ENCODE measurements at regions of chr2 and their contacts with region 1.

Region 1: DNA sequence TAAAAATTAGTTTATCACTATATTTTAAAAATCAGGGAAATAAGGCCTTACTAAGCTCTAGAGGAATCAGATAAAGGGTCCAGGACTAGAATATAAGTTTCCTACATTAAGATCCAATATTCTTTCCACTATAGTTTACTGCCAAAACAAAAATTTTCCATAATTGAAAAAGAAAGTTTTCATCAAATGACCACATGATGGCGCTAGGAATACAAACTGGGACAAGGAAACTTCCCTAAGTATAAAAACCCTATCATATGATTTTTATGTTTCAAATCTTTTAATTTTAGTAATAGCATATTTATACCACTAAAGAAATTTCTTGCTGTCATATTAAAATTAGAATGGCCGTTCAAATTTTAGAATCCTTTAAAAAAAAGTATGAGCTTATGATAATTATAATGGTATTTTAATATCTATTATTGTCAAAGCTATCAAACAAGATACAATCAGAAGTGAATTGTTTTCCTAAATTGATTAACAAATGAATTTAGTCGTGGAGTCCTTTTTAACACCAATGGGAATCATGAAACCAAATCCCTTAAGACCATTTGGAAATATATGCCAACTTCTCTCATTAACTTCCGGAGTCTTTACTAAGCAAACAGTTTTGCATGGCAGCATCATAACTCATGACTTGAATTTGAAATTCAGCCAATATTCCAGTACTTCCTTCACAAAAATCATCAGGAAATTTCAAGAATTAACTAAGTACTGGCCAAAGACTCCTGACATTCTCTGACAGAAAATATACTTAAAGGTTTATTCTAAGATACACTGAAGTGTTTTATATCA is 70.3 kb downstream of the SCN1A start:
- DNase-seq: no peak
- H3K4me3 Mint-ChIP-seq: no peak overlapping the region
- H3K27ac Mint-ChIP-seq: no peak overlapping the region
- H3K4me1 Mint-ChIP-seq: no peaks in the 10 kb centered on the region
- H3K27me3 Mint-ChIP-seq: no peaks in the 10 kb centered on the region

Region 2: DNA sequence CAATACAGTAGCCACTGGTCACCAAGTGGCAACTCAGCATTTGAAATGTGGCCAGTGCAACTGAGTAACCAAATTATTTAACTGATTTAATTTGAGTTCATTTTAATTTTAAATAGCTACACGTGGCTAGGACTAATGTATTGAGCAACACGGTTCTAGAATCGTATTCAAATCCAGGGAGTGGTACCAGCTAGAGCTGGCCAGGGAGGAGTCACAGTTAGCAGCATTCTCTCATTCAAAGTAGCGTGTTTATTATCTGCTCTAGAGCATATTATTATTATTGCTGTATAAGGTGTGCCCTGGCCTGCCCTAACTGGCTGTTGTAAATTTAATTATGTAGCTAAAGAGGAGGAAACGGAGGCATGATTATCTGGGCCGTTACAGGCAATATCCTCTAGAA is 356.4 kb before region 1 on chr2:
- CTCF ChIA-PET with region 1: no interaction called
- POLR2A ChIA-PET with region 1: no interaction called
- intact Hi-C with region 1: no loop called
- DNase-seq: no peak
- H3K4me3 Mint-ChIP-seq: no peak overlapping the region
- H3K27ac Mint-ChIP-seq: no peak overlapping the region
- H3K4me1 Mint-ChIP-seq: no peaks in the 10 kb centered on the region
- H3K27me3 Mint-ChIP-seq: peaks cover 12% of the 10 kb centered on the region

Region 3: GRCh38 chr2:166031054-166031453 is 26.5 kb before region 1 on chr2:
- CTCF ChIA-PET with region 1: no interaction called
- POLR2A ChIA-PET with region 1: no interaction called
- intact Hi-C with region 1: no loop called
- DNase-seq: no peak
- H3K4me3 Mint-ChIP-seq: no peak overlapping the region
- H3K27ac Mint-ChIP-seq: no peak overlapping the region
- H3K4me1 Mint-ChIP-seq: no peaks in the 10 kb centered on the region
- H3K27me3 Mint-ChIP-seq: peaks cover 4% of the 10 kb centered on the region

Region 4: GRCh38 chr2:166112193-166112605 is 54.6 kb after region 1 on chr2:
- CTCF ChIA-PET with region 1: no interaction called
- POLR2A ChIA-PET with region 1: no interaction called
- intact Hi-C with region 1: no loop called
- DNase-seq: peak; percentile 13
- H3K4me3 Mint-ChIP-seq: no peak overlapping the region
- H3K27ac Mint-ChIP-seq: no peak overlapping the region
- H3K4me1 Mint-ChIP-seq: peaks cover 11% of the 10 kb centered on the region
- H3K27me3 Mint-ChIP-seq: no peaks in the 10 kb centered on the region

Region 5: GRCh38 chr2:166127217-166128155 is 69.9 kb after region 1 on chr2 and contains the start of gene SCN1A:
- CTCF ChIA-PET with region 1: interaction called, 35 read pairs
- POLR2A ChIA-PET with region 1: no interaction called
- intact Hi-C with region 1: loop called (anchors 1 kb)
- DNase-seq: no peak
- H3K4me3 Mint-ChIP-seq: no peak within 1 kb of the TSS
- H3K27ac Mint-ChIP-seq: no peak within 1 kb of the TSS
- H3K4me1 Mint-ChIP-seq: peaks cover 4% of the 10 kb centered on the region
- H3K27me3 Mint-ChIP-seq: peaks cover 10% of the 10 kb centered on the region
- total RNA-seq, gene SCN1A: not detected

Region 6: GRCh38 chr2:166180951-166181812 is 123.6 kb after region 1 on chr2:
- CTCF ChIA-PET with region 1: interaction called, 3 read pairs
- POLR2A ChIA-PET with region 1: no interaction called
- intact Hi-C with region 1: loop called (anchors 1 kb)
- DNase-seq: peak; percentile 42
- H3K4me3 Mint-ChIP-seq: no peak overlapping the region
- H3K27ac Mint-ChIP-seq: no peak overlapping the region
- H3K4me1 Mint-ChIP-seq: no peaks in the 10 kb centered on the region
- H3K27me3 Mint-ChIP-seq: no peaks in the 10 kb centered on the region